ENCODE measurements at regions of chrX and their contacts with region 1.

Region 1: DNA sequence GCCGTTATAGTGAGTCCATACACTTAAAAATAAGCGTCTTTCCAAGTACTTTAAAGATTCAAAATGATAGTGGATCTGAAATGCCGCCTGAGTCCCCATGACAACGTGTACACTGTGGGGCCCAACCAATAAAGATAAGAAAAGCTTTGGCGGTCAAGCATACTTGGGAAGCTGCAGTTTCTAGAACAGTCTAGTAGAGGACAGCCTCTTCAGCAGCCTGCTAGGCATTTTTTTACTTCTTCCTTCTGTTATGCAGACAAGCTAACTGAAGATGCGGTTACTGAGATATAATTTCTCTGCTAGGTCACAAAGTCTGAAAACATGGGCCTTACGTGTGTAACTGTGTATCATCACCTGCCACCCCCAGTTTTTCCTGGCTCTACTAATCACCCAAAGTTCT is 402 bp upstream of the UPRT start:
- DNase-seq: no peak
- H3K4me3 ChIP-seq: peak overlapping the region; percentile 65 to 68
- H3K27ac ChIP-seq: peak overlapping the region; percentile 91 to 98
- H3K4me1 ChIP-seq: peaks cover 0 to 15% (median 7%) of the 10 kb centered on the region in 4 donors
- H3K27me3 ChIP-seq: no peaks in the 10 kb centered on the region
- CTCF ChIP-seq: no peak

Region 2: DNA sequence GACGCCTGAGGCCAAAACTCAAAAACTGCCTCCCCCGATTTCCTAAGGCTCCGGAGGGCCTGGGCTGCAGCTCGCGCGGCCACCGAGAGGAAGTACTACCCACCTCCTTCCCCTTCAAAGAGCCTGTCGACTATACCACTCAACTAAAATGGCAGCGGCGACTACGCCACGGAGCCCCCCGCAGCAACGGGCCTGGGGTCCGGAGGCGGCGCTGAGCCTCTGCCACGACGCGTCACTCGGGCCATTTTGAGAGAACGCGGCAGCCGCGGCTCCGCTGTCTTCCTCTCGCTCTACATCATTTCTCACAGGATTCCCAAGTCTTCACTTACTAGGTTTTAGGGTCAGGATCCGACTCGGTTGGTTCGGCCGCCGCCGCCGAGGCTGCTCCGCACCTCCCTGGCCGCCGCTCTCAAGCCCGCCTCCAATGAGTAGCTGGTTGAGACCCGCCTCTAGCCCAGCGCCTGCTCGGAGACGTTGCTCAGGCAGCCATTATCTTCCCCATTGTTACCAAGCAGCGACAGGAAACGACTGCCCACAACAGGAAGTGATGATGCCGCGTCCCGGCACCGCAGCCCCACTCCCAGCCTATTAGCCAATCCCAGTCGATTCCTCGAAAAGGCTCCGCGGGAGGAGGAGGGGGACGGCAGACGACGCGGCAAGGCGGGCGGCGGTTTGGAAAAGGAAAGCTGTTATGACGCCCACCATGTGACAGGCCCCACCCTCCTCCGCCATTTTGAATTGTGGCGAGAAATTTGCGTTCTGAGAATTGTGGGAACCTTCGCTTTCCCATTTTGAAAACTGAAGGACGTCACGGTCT is 659.2 kb before region 1 on chrX and contains the start of gene RLIM:
- intact Hi-C with region 1: loop called (anchors 5 kb)
- DNase-seq: peak; percentile 93 to 97
- H3K4me3 ChIP-seq: peak within 1 kb of the TSS; percentile 85 to 87
- H3K27ac ChIP-seq: peak within 1 kb of the TSS; percentile 93 to 98
- H3K4me1 ChIP-seq: no peaks in the 10 kb centered on the region
- H3K27me3 ChIP-seq: no peaks in the 10 kb centered on the region
- CTCF ChIP-seq: no peak

Region 3: DNA sequence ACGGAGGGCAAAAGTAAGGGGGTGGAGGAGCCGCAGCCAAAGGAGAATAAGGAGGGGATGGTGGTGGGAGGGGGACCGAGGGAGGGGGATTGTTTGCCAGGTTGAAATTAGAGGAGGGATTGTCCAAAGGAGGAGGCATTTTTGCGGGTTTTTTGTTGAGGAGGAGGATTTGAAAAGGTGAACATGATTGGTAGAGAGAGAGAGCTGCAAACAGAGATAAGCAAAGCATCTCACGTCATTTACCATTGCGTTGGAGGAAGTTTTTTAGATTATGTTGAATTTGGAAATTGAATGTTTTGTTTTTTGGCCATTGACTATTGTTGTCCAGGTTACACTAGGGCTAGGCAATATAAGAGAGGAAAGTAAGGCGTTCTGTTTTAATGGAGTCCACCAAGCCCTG is 62.9 kb before region 1 on chrX:
- intact Hi-C with region 1: no loop called
- DNase-seq: no peak
- H3K4me3 ChIP-seq: no peak overlapping the region
- H3K27ac ChIP-seq: no peak overlapping the region
- H3K4me1 ChIP-seq: no peaks in the 10 kb centered on the region
- H3K27me3 ChIP-seq: no peaks in the 10 kb centered on the region
- CTCF ChIP-seq: no peak

Region 4: DNA sequence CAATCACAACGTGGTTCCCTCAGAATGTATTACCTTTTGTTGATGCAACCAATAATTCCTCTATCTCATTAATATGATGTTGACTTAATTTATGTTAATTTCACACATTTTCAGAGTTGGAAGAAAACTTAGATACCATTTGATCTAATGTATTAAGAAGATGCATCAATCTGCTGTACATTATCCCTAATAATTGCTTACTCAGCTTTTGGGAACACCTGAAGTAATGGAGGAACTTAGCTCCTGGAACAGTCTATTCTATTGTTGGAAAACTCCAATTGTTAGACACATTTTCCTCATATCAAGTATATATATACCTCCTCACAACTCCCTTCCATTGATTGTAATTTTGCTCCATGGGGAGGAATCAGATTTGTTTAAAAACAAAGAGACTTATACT is 210.5 kb after region 1 on chrX:
- intact Hi-C with region 1: no loop called
- DNase-seq: no peak
- H3K4me3 ChIP-seq: no peak overlapping the region
- H3K27ac ChIP-seq: no peak overlapping the region
- H3K4me1 ChIP-seq: no peaks in the 10 kb centered on the region
- H3K27me3 ChIP-seq: no peaks in the 10 kb centered on the region
- CTCF ChIP-seq: no peak

Measured in tibial artery (tissue), 4 donors.